CD14-positive monocyte (primary cell): ENCODE measurements at regions of chr10 and their contacts with region 1.

Region 1: GRCh38 chr10:133013463-133013862 is 71.1 kb upstream of the CFAP46 start:
- DNase-seq: peak; percentile 83 to 88 (median 85)
- H3K4me3 ChIP-seq: peak overlapping the region in 1 of 3 experiments; percentile 57
- H3K4me3 Mint-ChIP-seq: peak overlapping the region; percentile 13 to 50
- H3K27ac ChIP-seq: peak overlapping the region; percentile 97 to 98
- H3K27ac Mint-ChIP-seq: peak overlapping the region in 2 of 7 donors; percentile 68 to 97
- H3K4me1 ChIP-seq: peaks cover 54 to 62% of the 10 kb centered on the region in 2 donors
- H3K4me1 Mint-ChIP-seq: peaks cover 41% of the 10 kb centered on the region
- H3K27me3 ChIP-seq: no peaks in the 10 kb centered on the region
- H3K27me3 Mint-ChIP-seq: peaks cover 0 to 5% (median 2%) of the 10 kb centered on the region in 3 donors
- CTCF ChIP-seq: no peak

Region 2: GRCh38 chr10:132762267-132762666 is 251.2 kb before region 1 on chr10:
- intact Hi-C with region 1: no loop called
- DNase-seq: no peak
- H3K4me3 ChIP-seq: no peak overlapping the region
- H3K4me3 Mint-ChIP-seq: no peak overlapping the region
- H3K27ac ChIP-seq: no peak overlapping the region
- H3K27ac Mint-ChIP-seq: no peak overlapping the region
- H3K4me1 ChIP-seq: no peaks in the 10 kb centered on the region
- H3K4me1 Mint-ChIP-seq: no peaks in the 10 kb centered on the region
- H3K27me3 ChIP-seq: no peaks in the 10 kb centered on the region
- H3K27me3 Mint-ChIP-seq: peaks cover 0 to 2% (median 0%) of the 10 kb centered on the region in 3 donors
- CTCF ChIP-seq: no peak

Region 3: DNA sequence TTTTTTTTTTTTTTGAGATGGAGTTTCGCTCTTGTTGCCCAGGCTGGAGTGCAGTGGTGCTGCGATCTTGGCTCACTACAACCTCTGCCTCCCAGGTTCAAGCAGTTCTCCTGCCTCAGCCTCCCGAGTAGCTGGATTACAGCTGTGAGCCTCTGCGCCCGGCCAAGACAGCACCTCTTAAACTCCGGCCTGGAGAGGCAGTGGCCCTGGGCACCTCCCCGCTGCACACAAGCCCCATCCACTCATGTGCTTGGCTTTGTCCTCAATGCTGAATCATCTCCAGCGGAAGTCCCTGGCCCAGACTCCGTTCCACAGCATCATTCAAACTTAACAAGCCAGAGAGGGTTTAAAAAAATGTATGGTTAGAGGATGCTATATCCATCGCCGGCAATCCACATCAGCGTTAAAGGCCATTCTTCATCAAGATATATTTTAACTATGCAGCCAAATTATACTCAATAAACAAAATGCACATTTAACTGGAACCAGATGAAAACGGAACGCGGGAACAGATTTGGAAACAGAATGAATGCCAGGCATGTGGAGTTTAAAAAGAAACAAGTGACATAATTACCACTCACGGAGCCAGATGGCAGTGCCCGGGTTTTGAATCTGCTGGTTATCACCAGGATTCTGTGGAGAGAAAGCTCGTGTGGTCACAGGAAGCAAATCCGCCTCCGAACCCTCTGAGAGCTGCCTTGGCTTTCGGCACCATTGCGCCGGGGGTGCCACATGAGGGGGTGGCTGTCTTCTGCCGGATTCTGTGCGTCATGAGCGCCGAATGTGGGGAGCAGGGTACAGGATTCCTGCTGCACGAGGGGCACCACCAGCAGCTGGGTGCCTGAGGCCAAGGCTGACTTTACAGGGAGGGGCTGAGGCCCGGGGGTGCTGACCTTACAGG is 25.5 kb before region 1 on chr10:
- intact Hi-C with region 1: no loop called
- DNase-seq: peak; percentile 32 to 42 (median 36)
- H3K4me3 ChIP-seq: no peak overlapping the region
- H3K4me3 Mint-ChIP-seq: no peak overlapping the region
- H3K27ac ChIP-seq: no peak overlapping the region
- H3K27ac Mint-ChIP-seq: no peak overlapping the region
- H3K4me1 ChIP-seq: no peaks in the 10 kb centered on the region
- H3K4me1 Mint-ChIP-seq: peaks cover 2% of the 10 kb centered on the region
- H3K27me3 ChIP-seq: peaks cover 0 to 5% of the 10 kb centered on the region in 2 donors
- H3K27me3 Mint-ChIP-seq: peaks cover 3 to 17% (median 13%) of the 10 kb centered on the region in 3 donors
- CTCF ChIP-seq: no peak

Region 4: GRCh38 chr10:133241501-133242205 is 228.2 kb after region 1 on chr10:
- intact Hi-C with region 1: loop called in 1 of 2 experiments (anchors 10 kb)
- DNase-seq: peak in 1 of 3 donors; percentile 16
- H3K4me3 ChIP-seq: peak overlapping the region; percentile 36 to 75 (median 40)
- H3K4me3 Mint-ChIP-seq: peak overlapping the region; percentile 82 to 94
- H3K27ac ChIP-seq: no peak overlapping the region
- H3K27ac Mint-ChIP-seq: peak overlapping the region in 5 of 7 donors; percentile 33 to 63 (median 62)
- H3K4me1 ChIP-seq: peaks cover 43 to 53% of the 10 kb centered on the region in 2 donors
- H3K4me1 Mint-ChIP-seq: peaks cover 27% of the 10 kb centered on the region
- H3K27me3 ChIP-seq: peaks cover 3 to 50% of the 10 kb centered on the region in 2 donors
- H3K27me3 Mint-ChIP-seq: peaks cover 31 to 75% (median 54%) of the 10 kb centered on the region in 3 donors
- CTCF ChIP-seq: no peak